Heart left ventricle (tissue), 16 donors: ENCODE measurements at regions of chr16 and their contacts with region 1.

Region 1: GRCh38 chr16:21554795-21555585 is 44.4 kb upstream of the METTL9 start:
- DNase-seq: peak; percentile 88 to 96 (median 89)
- ATAC-seq: peak; percentile 22 to 69 (median 67)
- H3K4me3 ChIP-seq: peak overlapping the region in 6 of 12 donors; percentile 6 to 23 (median 18)
- H3K27ac ChIP-seq: no peak overlapping the region
- H3K4me1 ChIP-seq: peaks cover 2 to 26% (median 14%) of the 10 kb centered on the region in 12 donors
- H3K27me3 ChIP-seq: peaks cover 0 to 10% (median 0%) of the 10 kb centered on the region in 9 donors
- CTCF ChIP-seq: peak; percentile 95 to 100 (median 100)
- POLR2A ChIP-seq: no peak

Region 2: DNA sequence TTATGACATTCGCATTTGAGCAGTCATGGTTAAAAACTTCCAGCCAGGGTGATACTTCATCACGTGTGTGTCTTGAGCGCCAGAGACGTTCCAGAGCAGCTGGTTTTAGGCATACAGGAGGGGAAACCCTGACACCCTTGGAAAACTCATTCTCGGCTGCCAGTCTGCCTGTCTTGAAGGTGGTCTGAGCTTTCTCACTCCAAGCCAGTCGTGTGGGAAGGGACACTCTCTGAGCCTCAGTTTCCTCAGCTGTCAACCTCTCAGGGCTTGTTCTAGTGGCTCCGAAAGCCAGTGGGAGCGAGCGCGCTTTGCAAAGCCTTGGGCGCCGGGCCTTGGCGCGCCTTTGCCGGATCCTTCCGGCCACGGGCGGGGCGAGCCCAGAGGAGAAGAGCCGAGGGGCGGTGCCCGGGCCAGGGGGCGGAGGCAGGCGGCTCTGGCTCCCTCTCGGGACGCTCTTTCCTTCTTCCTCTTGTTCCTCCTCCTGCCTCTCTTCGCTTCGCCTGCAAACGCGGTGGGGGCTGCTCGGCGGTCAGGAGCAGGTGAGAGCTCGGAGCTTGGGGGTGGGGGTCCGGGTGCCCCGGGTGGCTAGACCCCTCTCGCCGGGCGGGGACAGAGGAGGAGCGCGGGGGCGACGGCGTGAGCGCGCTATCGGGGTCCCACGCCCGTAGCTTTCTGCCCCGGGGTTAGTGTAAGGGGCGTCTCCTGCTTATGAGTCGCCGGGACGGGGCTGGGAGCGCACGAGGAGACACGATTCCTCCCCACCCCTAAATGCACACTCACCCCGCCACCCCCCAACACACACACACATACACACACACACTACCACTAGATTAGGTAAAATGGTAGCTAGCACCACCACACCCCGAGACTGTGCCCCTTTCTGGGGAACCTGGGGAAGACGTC is 396.5 kb before region 1 on chr16 and contains the start of gene LDAF1:
- intact Hi-C with region 1: loop called in 3 of 10 experiments (anchors 5 to 10 kb)
- DNase-seq: peak; percentile 85 to 93 (median 88)
- ATAC-seq: peak; percentile 81 to 93 (median 90)
- H3K4me3 ChIP-seq: peak within 1 kb of the TSS; percentile 74 to 95 (median 88)
- H3K27ac ChIP-seq: peak within 1 kb of the TSS; percentile 72 to 94 (median 88)
- H3K4me1 ChIP-seq: peaks cover 17 to 59% (median 40%) of the 10 kb centered on the region in 12 donors
- H3K27me3 ChIP-seq: no peaks in the 10 kb centered on the region
- CTCF ChIP-seq: peak in 3 of 12 donors; percentile 12 to 14 (median 13)
- POLR2A ChIP-seq: peak in 1 of 2 donors; percentile 69
- total RNA-seq, gene LDAF1: 87.0 to 334 (median 162) TPM

Region 3: DNA sequence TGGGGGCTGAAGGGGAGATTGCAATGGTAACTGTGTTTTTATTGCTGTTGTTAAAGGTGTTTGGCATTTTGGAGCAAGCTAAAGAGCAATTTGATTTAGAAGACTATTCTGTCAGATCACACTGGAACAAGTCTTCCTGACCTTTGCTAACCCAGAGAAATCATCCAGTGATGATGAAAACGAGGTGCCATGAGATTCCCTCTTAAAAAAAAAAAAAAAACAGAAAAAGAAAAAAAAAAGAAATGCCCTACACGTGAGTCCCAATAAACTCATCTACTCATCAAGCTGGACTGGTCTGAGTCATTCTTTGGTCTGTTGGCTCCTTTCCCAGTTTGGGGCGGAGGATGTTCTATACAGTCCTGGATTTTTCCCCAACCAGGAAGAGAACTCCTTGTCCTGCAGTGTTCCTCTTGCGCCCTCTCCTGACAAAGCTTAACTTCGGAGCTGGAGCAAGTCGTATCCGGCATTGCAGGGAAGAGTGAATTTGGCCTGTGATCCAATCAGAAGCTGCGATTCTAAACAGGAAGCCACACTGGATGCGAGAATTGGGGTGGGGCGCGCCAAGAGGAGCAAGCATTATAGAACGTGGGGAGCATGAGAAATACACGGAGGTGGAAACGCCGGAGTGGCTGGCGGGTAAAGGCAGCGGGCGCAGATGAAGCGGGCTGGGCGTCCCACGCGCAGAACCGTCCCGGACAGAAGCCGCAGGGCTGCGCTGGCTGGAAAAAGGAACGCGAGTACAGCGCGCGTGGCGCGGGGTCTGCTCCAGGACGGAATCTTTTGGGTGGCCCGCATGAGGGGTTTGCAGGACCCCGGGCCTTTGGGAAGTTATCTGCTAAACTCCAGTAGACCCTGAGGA is 254.5 kb before region 1 on chr16:
- intact Hi-C with region 1: loop called in 3 of 10 experiments (anchors 10 kb)
- DNase-seq: peak; percentile 82 to 96 (median 95)
- ATAC-seq: peak; percentile 94 to 98 (median 96)
- H3K4me3 ChIP-seq: peak overlapping the region; percentile 52 to 78 (median 67)
- H3K27ac ChIP-seq: peak overlapping the region; percentile 48 to 88 (median 70)
- H3K4me1 ChIP-seq: peaks cover 0 to 19% (median 9%) of the 10 kb centered on the region in 12 donors
- H3K27me3 ChIP-seq: peaks cover 0 to 9% (median 0%) of the 10 kb centered on the region in 9 donors
- CTCF ChIP-seq: peak; percentile 63 to 95 (median 82)
- POLR2A ChIP-seq: peak in 1 of 2 donors; percentile 39

Region 4: GRCh38 chr16:21574381-21574780 is 19.4 kb after region 1 on chr16:
- intact Hi-C with region 1: loop called in 1 of 10 experiments (anchors 1 kb)
- DNase-seq: no peak
- ATAC-seq: no peak
- H3K4me3 ChIP-seq: no peak overlapping the region
- H3K27ac ChIP-seq: no peak overlapping the region
- H3K4me1 ChIP-seq: peaks cover 0 to 3% (median 0%) of the 10 kb centered on the region in 12 donors
- H3K27me3 ChIP-seq: no peaks in the 10 kb centered on the region
- CTCF ChIP-seq: no peak
- POLR2A ChIP-seq: no peak

Region 5: GRCh38 chr16:22677024-22677830 is 1122.2 kb after region 1 on chr16:
- intact Hi-C with region 1: loop called in 1 of 10 experiments (anchors 5 kb)
- DNase-seq: peak in 2 of 5 donors; percentile 15 to 56
- ATAC-seq: peak in 1 of 4 donors; percentile 31
- H3K4me3 ChIP-seq: no peak overlapping the region
- H3K27ac ChIP-seq: no peak overlapping the region
- H3K4me1 ChIP-seq: peaks cover 0 to 16% (median 0%) of the 10 kb centered on the region in 12 donors
- H3K27me3 ChIP-seq: peaks cover 0 to 18% (median 0%) of the 10 kb centered on the region in 9 donors
- CTCF ChIP-seq: no peak
- POLR2A ChIP-seq: no peak

Region 6: DNA sequence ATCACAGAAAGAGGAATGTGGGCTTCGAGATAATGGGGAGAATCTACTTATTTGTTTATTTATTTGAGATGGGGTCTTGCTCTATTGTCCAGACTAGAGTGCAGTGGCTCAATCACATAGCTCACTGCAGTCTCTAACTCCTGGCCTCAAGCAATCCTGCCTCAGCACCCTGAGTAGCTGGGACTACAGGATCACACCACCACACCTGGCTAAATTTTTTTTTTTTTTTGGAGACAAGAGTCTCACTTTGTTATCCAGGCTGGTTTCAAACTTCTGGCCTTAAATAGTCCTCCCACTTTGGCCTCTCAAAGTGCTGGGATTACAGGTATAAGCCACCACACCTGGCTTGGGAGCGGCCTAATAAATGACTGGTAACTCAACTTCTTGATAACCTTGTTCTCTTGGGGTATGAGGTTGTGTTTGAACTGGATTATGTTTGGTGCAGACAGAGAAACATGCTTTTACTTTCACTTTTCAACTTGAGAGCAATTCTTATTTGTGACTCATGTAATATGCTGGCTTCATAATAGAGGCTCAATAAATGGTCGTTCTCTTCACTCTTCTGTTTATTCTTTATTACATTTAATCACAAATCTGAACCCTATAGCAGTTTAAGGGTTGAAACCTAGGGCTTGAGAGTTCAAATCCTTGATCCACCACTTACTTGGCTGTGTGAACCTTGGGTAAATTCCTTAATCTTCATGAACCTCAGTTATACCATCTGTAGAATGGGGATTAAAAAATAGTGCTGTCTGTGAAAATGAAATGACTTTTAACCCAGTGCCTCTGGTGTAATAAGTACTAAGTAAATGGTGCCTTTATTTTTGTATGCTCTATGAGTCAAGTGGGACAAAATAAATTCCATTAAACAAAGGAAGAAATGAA is 1129.8 kb after region 1 on chr16:
- intact Hi-C with region 1: loop called in 2 of 10 experiments (anchors 2 to 5 kb)
- DNase-seq: no peak
- ATAC-seq: no peak
- H3K4me3 ChIP-seq: no peak overlapping the region
- H3K27ac ChIP-seq: peak overlapping the region in 8 of 12 donors; percentile 5 to 73 (median 53)
- H3K4me1 ChIP-seq: peaks cover 0 to 19% (median 5%) of the 10 kb centered on the region in 12 donors
- H3K27me3 ChIP-seq: peaks cover 0 to 5% (median 0%) of the 10 kb centered on the region in 9 donors
- CTCF ChIP-seq: no peak
- POLR2A ChIP-seq: no peak